ENCODE measurements at regions of chr22 and their contacts with region 1.

Region 1: GRCh38 chr22:34414484-34415440 is 494.5 kb upstream of the LARGE1 start:
- DNase-seq: peak; percentile 84
- ATAC-seq: peak; percentile 91
- H3K4me3 ChIP-seq: no peak overlapping the region
- H3K27ac ChIP-seq: no peak overlapping the region
- H3K4me1 ChIP-seq: no peaks in the 10 kb centered on the region
- H3K27me3 ChIP-seq: no peaks in the 10 kb centered on the region
- CTCF ChIP-seq: peak; percentile 91
- EP300 ChIP-seq: no peak
- POLR2A ChIP-seq: no peak
- RAD21 ChIP-seq: peak; percentile 89

Region 2: DNA sequence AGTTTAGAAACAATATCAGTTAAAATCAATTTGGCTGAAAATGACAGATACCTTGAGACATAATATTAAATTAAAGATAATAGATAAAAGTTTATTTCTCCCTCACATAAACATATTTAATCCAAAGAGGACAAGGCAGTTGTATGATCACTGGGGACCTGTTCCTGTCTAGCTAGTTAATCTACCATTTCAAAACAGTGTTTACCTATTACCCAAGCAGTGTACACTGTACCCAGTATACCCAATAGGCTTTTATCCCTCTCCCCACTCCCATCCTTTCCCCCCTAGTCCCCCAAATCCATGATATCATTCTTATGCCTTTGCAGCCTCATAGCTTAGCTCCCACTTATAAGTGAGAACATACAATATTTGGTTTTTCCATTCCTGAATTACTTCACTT is 264.7 kb before region 1 on chr22:
- CTCF ChIA-PET with region 1: no interaction called
- POLR2A ChIA-PET with region 1: no interaction called
- in situ Hi-C with region 1: no loop called
- intact Hi-C with region 1: no loop called
- DNase-seq: no peak
- ATAC-seq: no peak
- H3K4me3 ChIP-seq: no peak overlapping the region
- H3K27ac ChIP-seq: no peak overlapping the region
- H3K4me1 ChIP-seq: no peaks in the 10 kb centered on the region
- H3K27me3 ChIP-seq: 0 out of 5 replicates have a peak, but pooled peaks cover 0 to 6% of the 10 kb centered on the region in 2 experiments
- CTCF ChIP-seq: no peak
- EP300 ChIP-seq: no peak
- POLR2A ChIP-seq: no peak
- RAD21 ChIP-seq: no peak

Region 3: GRCh38 chr22:34975721-34976120 is 561.0 kb after region 1 on chr22:
- CTCF ChIA-PET with region 1: no interaction called
- POLR2A ChIA-PET with region 1: no interaction called
- in situ Hi-C with region 1: loop called (anchors 25 kb)
- intact Hi-C with region 1: no loop called
- DNase-seq: no peak
- ATAC-seq: peak; percentile 72
- H3K4me3 ChIP-seq: no peak overlapping the region
- H3K27ac ChIP-seq: no peak overlapping the region
- H3K4me1 ChIP-seq: no peaks in the 10 kb centered on the region
- H3K27me3 ChIP-seq: peaks cover 2 to 16% of the 10 kb centered on the region in 2 experiments; a peak in 3 of 5 replicates
- CTCF ChIP-seq: peak; percentile 23; the same call in 1 of the 2 replicates
- EP300 ChIP-seq: no peak
- POLR2A ChIP-seq: no peak
- RAD21 ChIP-seq: no peak

Region 4: GRCh38 chr22:35023692-35024363 is 609.1 kb after region 1 on chr22:
- CTCF ChIA-PET with region 1: interaction called, 12 read pairs
- POLR2A ChIA-PET with region 1: no interaction called
- in situ Hi-C with region 1: no loop called
- intact Hi-C with region 1: no loop called
- DNase-seq: no peak
- ATAC-seq: peak; percentile 84
- H3K4me3 ChIP-seq: no peak overlapping the region
- H3K27ac ChIP-seq: no peak overlapping the region
- H3K4me1 ChIP-seq: no peaks in the 10 kb centered on the region
- H3K27me3 ChIP-seq: 0 out of 5 replicates have a peak, but pooled peaks cover 0 to 2% of the 10 kb centered on the region in 2 experiments
- CTCF ChIP-seq: peak; percentile 85
- EP300 ChIP-seq: no peak
- POLR2A ChIP-seq: no peak
- RAD21 ChIP-seq: peak; percentile 68

Region 5: GRCh38 chr22:35037089-35037488 is 622.3 kb after region 1 on chr22:
- CTCF ChIA-PET with region 1: no interaction called
- POLR2A ChIA-PET with region 1: no interaction called
- in situ Hi-C with region 1: loop called (anchors 10 kb)
- intact Hi-C with region 1: no loop called
- DNase-seq: no peak
- ATAC-seq: peak; percentile 54; the same call in 2 of the 3 replicates
- H3K4me3 ChIP-seq: no peak overlapping the region
- H3K27ac ChIP-seq: no peak overlapping the region
- H3K4me1 ChIP-seq: no peaks in the 10 kb centered on the region
- H3K27me3 ChIP-seq: no peaks in the 10 kb centered on the region; a peak in 1 of 5 replicates
- CTCF ChIP-seq: peak; percentile 45
- EP300 ChIP-seq: no peak
- POLR2A ChIP-seq: no peak
- RAD21 ChIP-seq: no peak

Region 6: GRCh38 chr22:35150183-35151107 is 735.7 kb after region 1 on chr22:
- CTCF ChIA-PET with region 1: interaction called, 12 read pairs
- POLR2A ChIA-PET with region 1: no interaction called
- in situ Hi-C with region 1: loop called (anchors 10 kb)
- intact Hi-C with region 1: loop called (anchors 1 kb)
- DNase-seq: peak; percentile 36
- ATAC-seq: peak; percentile 84
- H3K4me3 ChIP-seq: no peak overlapping the region
- H3K27ac ChIP-seq: no peak overlapping the region
- H3K4me1 ChIP-seq: no peaks in the 10 kb centered on the region
- H3K27me3 ChIP-seq: peaks cover 0 to 4% of the 10 kb centered on the region in 2 experiments; a peak in 2 of 5 replicates
- CTCF ChIP-seq: peak; percentile 90
- EP300 ChIP-seq: no peak
- POLR2A ChIP-seq: no peak
- RAD21 ChIP-seq: peak; percentile 58

Measured in HepG2 (cell line).